Transverse colon (tissue), 4 donors: ENCODE measurements at regions of chr4 and their contacts with region 1.

Region 1: GRCh38 chr4:7124689-7125442 is 57.0 kb upstream of the GRPEL1 start:
- DNase-seq: peak; percentile 40
- H3K4me3 ChIP-seq: no peak overlapping the region
- H3K27ac ChIP-seq: peak overlapping the region in 3 of 4 donors; percentile 8 to 37 (median 15)
- H3K4me1 ChIP-seq: peaks cover 0 to 12% (median 0%) of the 10 kb centered on the region in 4 donors
- H3K27me3 ChIP-seq: no peaks in the 10 kb centered on the region
- CTCF ChIP-seq: no peak
- EP300 ChIP-seq: no peak
- POLR2A ChIP-seq: no peak

Region 2: GRCh38 chr4:7313347-7313811 is 188.5 kb after region 1 on chr4:
- in situ Hi-C with region 1: no loop called
- intact Hi-C with region 1: no loop called
- DNase-seq: no peak
- H3K4me3 ChIP-seq: no peak overlapping the region
- H3K27ac ChIP-seq: peak overlapping the region in 2 of 4 donors; percentile 34 to 35
- H3K4me1 ChIP-seq: no peaks in the 10 kb centered on the region
- H3K27me3 ChIP-seq: no peaks in the 10 kb centered on the region
- CTCF ChIP-seq: no peak
- EP300 ChIP-seq: no peak
- POLR2A ChIP-seq: no peak

Region 3: DNA sequence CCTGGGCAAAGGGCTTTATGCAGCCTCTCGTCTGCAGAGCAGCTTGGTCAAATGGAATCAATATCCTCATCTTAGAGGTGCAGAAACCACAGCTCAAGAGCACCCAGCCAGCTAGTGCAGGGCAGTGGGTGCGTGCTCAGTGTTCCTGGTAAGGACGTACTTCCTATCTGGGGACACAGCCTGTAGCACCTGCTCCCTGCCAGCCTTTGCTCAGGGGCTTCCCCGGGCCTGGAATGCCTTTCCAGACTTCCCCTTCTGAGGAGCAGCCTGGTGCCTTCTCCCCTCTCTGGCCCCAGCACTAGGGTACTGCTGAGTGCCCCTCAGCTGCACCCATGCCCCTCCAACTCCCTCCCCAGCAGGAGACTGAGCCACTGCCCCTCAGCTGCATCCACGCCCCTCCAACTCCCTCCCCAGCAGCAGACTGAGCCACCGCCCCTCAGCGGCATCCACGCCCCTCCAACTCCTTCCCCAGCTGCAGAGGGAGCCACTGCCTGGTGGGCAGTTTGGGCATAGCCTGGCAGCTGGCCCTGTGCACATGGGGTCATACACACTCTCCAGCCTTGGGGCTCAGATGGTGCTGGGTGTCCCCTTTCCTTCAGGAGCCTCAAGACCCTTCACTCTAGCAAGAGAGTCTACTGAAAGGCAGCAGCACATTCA is 857.0 kb after region 1 on chr4:
- in situ Hi-C with region 1: no loop called
- intact Hi-C with region 1: loop called (anchors 5 kb)
- DNase-seq: peak; percentile 50
- H3K4me3 ChIP-seq: no peak overlapping the region
- H3K27ac ChIP-seq: peak overlapping the region in 2 of 4 donors; percentile 6 to 35
- H3K4me1 ChIP-seq: peaks cover 7 to 58% (median 50%) of the 10 kb centered on the region in 4 donors
- H3K27me3 ChIP-seq: no peaks in the 10 kb centered on the region
- CTCF ChIP-seq: no peak
- EP300 ChIP-seq: no peak
- POLR2A ChIP-seq: peak; percentile 7